HCT116 (cell line): ENCODE measurements at regions of chr1 and their contacts with region 1.

Region 1: GRCh38 chr1:215517441-215517891 is 49.6 kb upstream of the KCTD3 start:
- DNase-seq: peak; percentile 13
- ATAC-seq: peak; percentile 74
- H3K4me3 ChIP-seq: no peak overlapping the region
- H3K27ac ChIP-seq: no peak overlapping the region
- H3K4me1 ChIP-seq: no peaks in the 10 kb centered on the region
- H3K27me3 ChIP-seq: no peaks in the 10 kb centered on the region
- CTCF ChIP-seq: peak; percentile 15 to 44 (median 21); a peak in 3 of 6 replicates
- POLR2A ChIP-seq: no peak
- RAD21 ChIP-seq: peak; percentile 70

Region 2: GRCh38 chr1:214808845-214809460 is 708.5 kb before region 1 on chr1:
- CTCF ChIA-PET with region 1: interaction called, 3 read pairs
- POLR2A ChIA-PET with region 1: no interaction called
- RAD21 ChIA-PET with region 1: no interaction called
- intact Hi-C with region 1: loop called (anchors 5 kb)
- DNase-seq: peak; percentile 22
- ATAC-seq: peak; percentile 90
- H3K4me3 ChIP-seq: no peak overlapping the region
- H3K27ac ChIP-seq: no peak overlapping the region
- H3K4me1 ChIP-seq: no peaks in the 10 kb centered on the region
- H3K27me3 ChIP-seq: no peaks in the 10 kb centered on the region
- CTCF ChIP-seq: peak; percentile 34 to 53 (median 45); a peak in 4 of 6 replicates
- POLR2A ChIP-seq: no peak
- RAD21 ChIP-seq: peak; percentile 73

Region 3: GRCh38 chr1:215905493-215906115 is 388.1 kb after region 1 on chr1:
- CTCF ChIA-PET with region 1: no interaction called
- POLR2A ChIA-PET with region 1: no interaction called
- RAD21 ChIA-PET with region 1: no interaction called
- intact Hi-C with region 1: no loop called
- DNase-seq: no peak
- ATAC-seq: no peak
- H3K4me3 ChIP-seq: no peak overlapping the region
- H3K27ac ChIP-seq: no peak overlapping the region
- H3K4me1 ChIP-seq: no peaks in the 10 kb centered on the region
- H3K27me3 ChIP-seq: peaks cover 4% of the 10 kb centered on the region
- CTCF ChIP-seq: no peak
- POLR2A ChIP-seq: no peak
- RAD21 ChIP-seq: no peak